MCF 10A (cell line): ENCODE measurements at regions of chr5 and their contacts with region 1.

Region 1: DNA sequence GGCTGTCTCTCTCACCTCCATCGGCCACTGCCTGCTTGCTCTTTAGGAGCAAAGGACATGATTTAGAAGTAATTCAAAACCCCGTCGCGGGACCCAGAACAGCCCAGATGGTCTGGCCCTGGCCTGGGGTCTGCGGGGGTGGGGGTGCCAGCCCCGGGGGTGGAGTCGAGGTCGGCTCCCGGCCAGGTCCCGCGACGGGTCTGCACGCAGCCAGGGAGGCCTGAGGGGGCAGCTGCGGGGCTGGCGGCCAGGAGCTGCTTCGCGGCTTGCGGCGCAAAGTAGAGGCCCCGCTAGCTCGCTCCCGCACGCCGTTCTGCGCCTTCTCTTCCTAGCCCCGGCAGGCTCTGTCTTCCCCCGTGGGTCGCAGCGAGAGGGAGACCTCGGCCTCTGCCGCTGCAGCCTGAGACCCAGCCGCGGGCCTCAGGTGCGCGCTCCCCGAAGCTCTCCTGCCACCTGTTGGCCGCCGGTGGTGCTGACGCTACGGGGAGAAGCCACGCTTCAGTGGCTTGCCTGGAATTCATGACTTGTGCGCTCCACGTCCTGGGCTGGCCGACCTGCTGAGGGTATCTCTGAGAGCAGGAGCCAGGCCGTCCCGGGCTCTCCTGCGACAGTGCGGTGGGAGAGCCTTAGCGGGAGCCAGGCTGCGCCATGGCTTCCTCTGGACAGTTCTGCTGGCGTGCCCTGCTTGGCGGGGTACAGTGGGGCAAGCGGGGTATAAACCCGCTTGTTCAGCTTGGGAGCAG is 157.2 kb upstream of the PITX1 start:
- DNase-seq: peak; percentile 90
- H3K4me3 Mint-ChIP-seq: peak overlapping the region; percentile 76
- H3K27ac Mint-ChIP-seq: no peak overlapping the region
- H3K4me1 Mint-ChIP-seq: peaks cover 7% of the 10 kb centered on the region
- H3K27me3 Mint-ChIP-seq: no peaks in the 10 kb centered on the region
- CTCF ChIP-seq: peak; percentile 99

Region 2: DNA sequence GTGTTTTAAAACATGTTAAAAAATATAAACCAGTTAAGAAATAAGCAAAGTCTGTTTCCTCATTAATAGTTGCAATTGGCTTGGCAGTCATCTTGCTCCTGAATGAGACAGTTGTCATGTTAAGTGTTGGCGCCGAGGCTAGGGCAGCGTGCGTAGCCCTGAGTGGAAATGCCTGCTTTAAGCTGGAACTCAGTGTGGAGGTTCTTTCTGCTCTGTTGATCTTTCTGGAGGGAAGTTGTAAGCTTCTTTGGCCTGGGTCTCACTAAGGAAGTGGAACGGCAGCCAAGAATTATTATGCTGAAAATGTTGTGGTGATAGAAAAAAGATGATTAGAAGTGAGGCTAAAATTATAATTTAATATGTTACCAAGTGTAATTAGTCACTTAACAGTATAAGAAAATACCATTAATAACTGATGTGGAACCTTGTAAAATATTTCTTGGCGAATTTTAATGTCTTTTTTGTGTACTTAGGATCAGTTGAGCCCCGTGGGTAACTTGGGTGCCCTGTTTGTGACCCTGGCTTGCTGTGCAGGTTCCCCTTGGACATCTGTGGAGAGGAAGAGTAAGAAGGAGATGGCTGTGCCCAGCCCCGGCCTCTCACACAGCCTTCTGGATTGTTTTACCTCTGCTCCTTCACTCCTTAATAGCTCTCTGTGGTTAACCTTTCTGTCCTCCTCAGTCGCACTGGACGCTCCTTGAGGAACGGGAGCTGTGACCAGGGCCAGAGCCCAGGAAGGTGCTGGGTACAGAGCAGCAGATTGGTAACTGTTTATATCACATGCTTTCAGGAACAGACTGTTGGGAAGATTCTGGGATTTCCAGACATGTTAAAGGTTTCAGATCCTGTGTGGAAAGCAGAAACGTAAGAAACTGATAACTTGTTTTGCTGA is 255.3 kb before region 1 on chr5:
- CTCF ChIA-PET with region 1: interaction called, 10 read pairs
- POLR2A ChIA-PET with region 1: no interaction called
- intact Hi-C with region 1: no loop called
- DNase-seq: no peak
- H3K4me3 Mint-ChIP-seq: no peak overlapping the region
- H3K27ac Mint-ChIP-seq: no peak overlapping the region
- H3K4me1 Mint-ChIP-seq: no peaks in the 10 kb centered on the region
- H3K27me3 Mint-ChIP-seq: no peaks in the 10 kb centered on the region
- CTCF ChIP-seq: no peak

Region 3: GRCh38 chr5:135024956-135025729 is 166.1 kb before region 1 on chr5:
- CTCF ChIA-PET with region 1: interaction called, 11 read pairs
- POLR2A ChIA-PET with region 1: interaction called, 3 read pairs
- intact Hi-C with region 1: no loop called
- DNase-seq: peak; percentile 96
- H3K4me3 Mint-ChIP-seq: no peak overlapping the region
- H3K27ac Mint-ChIP-seq: peak overlapping the region; percentile 24
- H3K4me1 Mint-ChIP-seq: peaks cover 10% of the 10 kb centered on the region
- H3K27me3 Mint-ChIP-seq: no peaks in the 10 kb centered on the region
- CTCF ChIP-seq: no peak

Region 4: DNA sequence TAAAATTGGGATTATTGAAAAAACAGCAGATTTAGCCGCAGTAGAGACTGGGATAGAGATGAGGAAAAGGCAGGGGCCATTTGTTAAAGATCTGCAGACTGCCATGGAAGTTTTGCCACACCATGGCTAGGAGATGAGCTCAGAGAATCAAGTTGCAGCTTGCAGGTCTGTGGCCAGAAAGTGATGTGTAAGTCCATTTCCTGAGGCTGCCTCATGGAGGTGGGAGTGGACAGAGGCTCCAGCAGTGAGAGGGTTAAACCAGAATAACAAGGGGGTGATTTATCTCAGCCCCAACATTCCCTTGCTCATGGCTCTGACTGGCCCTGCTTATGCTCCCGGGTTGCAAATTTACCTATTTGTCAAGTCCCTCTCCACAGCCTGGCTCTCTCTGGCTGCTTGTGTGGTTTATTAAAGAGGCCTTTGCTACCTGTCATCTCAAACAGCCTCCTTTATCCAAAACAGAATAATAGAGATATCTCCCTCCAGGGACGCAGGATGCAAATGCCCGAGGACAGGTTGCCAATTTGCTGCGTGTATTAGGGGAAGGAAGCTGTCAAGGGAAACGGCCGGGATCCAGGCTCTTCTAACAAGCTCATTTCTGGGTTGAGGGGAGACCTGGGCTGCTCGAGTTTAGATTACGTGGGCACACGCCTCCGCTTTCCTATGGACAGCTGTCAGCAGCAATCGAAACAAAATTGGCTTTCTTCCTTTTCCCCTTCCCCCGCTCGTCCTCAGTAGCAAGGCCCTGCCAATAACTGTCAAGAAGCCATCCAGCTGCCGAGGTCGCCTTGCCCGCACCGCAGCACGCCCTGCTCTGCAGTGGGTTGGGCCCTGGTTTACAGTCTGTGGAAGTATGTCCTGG is 84.4 kb before region 1 on chr5:
- CTCF ChIA-PET with region 1: interaction called, 16 read pairs
- POLR2A ChIA-PET with region 1: no interaction called
- intact Hi-C with region 1: loop called (anchors 2 kb)
- DNase-seq: peak; percentile 78
- H3K4me3 Mint-ChIP-seq: no peak overlapping the region
- H3K27ac Mint-ChIP-seq: peak overlapping the region; percentile 33
- H3K4me1 Mint-ChIP-seq: peaks cover 20% of the 10 kb centered on the region
- H3K27me3 Mint-ChIP-seq: no peaks in the 10 kb centered on the region
- CTCF ChIP-seq: no peak

Region 5: DNA sequence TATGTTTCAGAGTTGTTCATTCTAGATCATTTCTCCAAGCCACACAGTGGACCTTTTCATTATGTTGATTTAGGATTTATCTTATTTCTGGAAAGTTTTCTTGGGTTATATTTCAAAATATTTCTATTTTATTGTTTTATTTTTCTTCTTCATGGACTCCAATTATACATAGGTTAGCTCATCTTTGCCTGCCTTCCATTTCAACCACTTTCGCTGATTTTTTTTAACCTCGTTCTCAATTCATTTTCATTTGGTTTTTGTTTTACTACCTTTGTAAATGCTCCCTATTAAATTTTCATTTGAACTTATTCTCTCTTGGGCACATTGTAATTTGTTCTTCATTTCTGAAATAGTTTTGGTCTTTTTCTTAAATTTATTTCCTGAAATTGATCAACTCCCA is 11.8 kb after region 1 on chr5:
- CTCF ChIA-PET with region 1: interaction called, 14 read pairs
- POLR2A ChIA-PET with region 1: no interaction called
- intact Hi-C with region 1: no loop called
- DNase-seq: no peak
- H3K4me3 Mint-ChIP-seq: no peak overlapping the region
- H3K27ac Mint-ChIP-seq: no peak overlapping the region
- H3K4me1 Mint-ChIP-seq: no peaks in the 10 kb centered on the region
- H3K27me3 Mint-ChIP-seq: no peaks in the 10 kb centered on the region
- CTCF ChIP-seq: no peak

Region 6: DNA sequence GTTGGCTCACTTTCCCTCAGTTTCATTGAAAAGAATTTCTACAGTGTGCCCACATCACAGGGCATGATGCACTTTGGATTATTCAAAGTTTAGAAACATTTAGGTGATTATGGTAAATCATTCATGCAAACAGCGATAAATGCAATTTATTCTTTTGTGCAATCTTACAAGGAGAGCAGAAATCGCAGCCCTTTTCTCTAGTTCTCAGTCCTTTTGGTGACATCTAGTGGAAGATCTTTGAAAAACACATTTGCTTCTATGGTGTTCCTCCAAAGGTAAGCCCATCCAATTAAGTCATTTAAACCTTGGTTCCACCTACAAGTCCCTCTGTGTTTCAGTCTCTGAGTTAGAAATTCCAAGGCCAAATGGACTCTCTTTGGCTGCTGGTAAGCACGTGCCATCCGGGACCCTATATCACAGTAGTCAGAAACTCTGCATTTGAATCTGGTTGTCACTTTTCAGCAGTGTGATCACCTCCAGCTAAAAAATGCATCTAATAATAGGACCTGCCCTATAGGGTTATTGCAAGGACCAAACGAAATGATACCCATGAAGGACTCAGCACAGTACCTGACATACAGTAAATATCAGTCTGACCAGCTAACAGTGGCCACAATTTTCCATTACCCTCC is 141.4 kb after region 1 on chr5:
- CTCF ChIA-PET with region 1: interaction called, 46 read pairs
- POLR2A ChIA-PET with region 1: interaction called, 3 read pairs
- intact Hi-C with region 1: loop called (anchors 1 kb)
- DNase-seq: peak; percentile 80
- H3K4me3 Mint-ChIP-seq: no peak overlapping the region
- H3K27ac Mint-ChIP-seq: no peak overlapping the region
- H3K4me1 Mint-ChIP-seq: peaks cover 14% of the 10 kb centered on the region
- H3K27me3 Mint-ChIP-seq: no peaks in the 10 kb centered on the region
- CTCF ChIP-seq: peak; percentile 75